Mammary epithelial cell (primary cell): ENCODE measurements at regions of chr7 and their contacts with region 1.

Region 1: GRCh38 chr7:155306673-155307470 is 9.2 kb downstream of the INSIG1 start:
- DNase-seq: peak; percentile 92
- H3K4me3 ChIP-seq: no peak overlapping the region
- H3K27ac ChIP-seq: peak overlapping the region; percentile 67
- H3K4me1 ChIP-seq: peaks cover 23% of the 10 kb centered on the region
- H3K27me3 ChIP-seq: no peaks in the 10 kb centered on the region
- CTCF ChIP-seq: no peak

Region 2: DNA sequence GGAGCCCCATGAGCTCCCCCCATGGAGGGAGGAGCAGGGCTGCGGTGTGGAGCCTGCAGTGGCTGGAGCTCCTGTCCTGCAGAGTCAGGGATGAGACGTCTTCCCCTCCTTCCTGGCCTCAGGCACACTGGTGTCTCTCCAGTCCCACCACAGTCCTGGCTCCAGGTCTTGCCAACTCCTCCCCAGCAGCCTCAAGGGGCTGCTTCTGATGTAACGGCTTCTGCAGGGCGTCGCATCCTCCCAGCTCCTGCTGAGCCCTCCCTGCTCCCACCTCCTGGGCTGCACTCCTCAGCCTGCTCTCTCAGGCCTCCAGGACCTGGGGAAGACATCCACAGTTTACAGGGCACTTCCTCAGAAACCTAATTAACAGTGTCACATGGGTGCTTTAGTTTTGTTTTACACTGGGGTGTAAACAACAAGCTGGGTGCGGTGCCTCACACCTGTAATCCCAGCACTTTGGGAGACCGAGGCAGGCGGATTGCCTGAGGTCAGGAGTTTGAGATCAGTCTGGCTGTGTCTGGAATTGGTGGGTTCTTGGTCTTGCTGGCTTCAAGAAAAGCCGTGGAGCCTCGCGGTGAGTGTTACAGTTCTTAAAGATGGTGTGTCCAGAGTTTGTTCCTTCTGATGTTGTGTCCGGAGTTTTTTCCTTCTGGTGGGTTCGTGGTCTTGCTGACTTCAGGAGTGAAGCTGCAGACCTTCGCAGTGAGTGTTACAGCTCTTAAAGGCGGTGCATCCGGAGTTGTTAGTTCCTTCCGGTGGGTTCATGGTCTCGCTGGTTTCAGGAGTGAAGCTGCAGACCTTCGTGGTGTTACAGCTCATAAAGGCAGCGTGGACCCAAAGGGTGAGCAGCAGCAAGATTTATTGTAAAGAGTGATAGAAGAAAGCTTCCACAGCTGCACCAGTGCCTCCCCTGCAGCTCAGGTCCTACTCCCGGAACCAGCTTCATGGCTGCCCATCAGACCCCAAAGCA is 398.9 kb before region 1 on chr7:
- CTCF ChIA-PET with region 1: interaction called, 16 read pairs
- dilution Hi-C with region 1: no loop called
- in situ Hi-C with region 1: no loop called
- intact Hi-C with region 1: no loop called
- DNase-seq: no peak
- H3K4me3 ChIP-seq: no peak overlapping the region
- H3K27ac ChIP-seq: no peak overlapping the region
- H3K4me1 ChIP-seq: no peaks in the 10 kb centered on the region
- H3K27me3 ChIP-seq: no peaks in the 10 kb centered on the region
- CTCF ChIP-seq: no peak

Region 3: GRCh38 chr7:155287304-155287935 is 19.5 kb before region 1 on chr7:
- CTCF ChIA-PET with region 1: interaction called, 11 read pairs
- dilution Hi-C with region 1: no loop called
- in situ Hi-C with region 1: no loop called
- intact Hi-C with region 1: no loop called
- DNase-seq: no peak
- H3K4me3 ChIP-seq: no peak overlapping the region
- H3K27ac ChIP-seq: no peak overlapping the region
- H3K4me1 ChIP-seq: peaks cover 10% of the 10 kb centered on the region
- H3K27me3 ChIP-seq: peaks cover 3% of the 10 kb centered on the region
- CTCF ChIP-seq: no peak